IMR-90 (cell line): ENCODE measurements at regions of chr1 and their contacts with region 1.

Region 1: GRCh38 chr1:100866041-100866900 is 28.4 kb downstream of the EXTL2 start:
- DNase-seq: peak; percentile 70
- ATAC-seq: peak; percentile 56
- H3K4me3 ChIP-seq: no peak overlapping the region
- H3K27ac ChIP-seq: peak overlapping the region; percentile 81
- H3K4me1 ChIP-seq: peaks cover 12% of the 10 kb centered on the region
- H3K27me3 ChIP-seq: no peaks in the 10 kb centered on the region
- CTCF ChIP-seq: peak; percentile 65
- POLR2A ChIP-seq: no peak
- RAD21 ChIP-seq: peak; percentile 72

Region 2: GRCh38 chr1:100277866-100278265 is 588.4 kb before region 1 on chr1:
- CTCF ChIA-PET with region 1: no interaction called
- POLR2A ChIA-PET with region 1: no interaction called
- dilution Hi-C with region 1: no loop called
- in situ Hi-C with region 1: no loop called
- intact Hi-C with region 1: loop called (anchors 5 kb)
- DNase-seq: no peak
- ATAC-seq: no peak
- H3K4me3 ChIP-seq: no peak overlapping the region
- H3K27ac ChIP-seq: no peak overlapping the region
- H3K4me1 ChIP-seq: no peaks in the 10 kb centered on the region
- H3K27me3 ChIP-seq: no peaks in the 10 kb centered on the region
- CTCF ChIP-seq: no peak
- POLR2A ChIP-seq: no peak
- RAD21 ChIP-seq: no peak

Region 3: DNA sequence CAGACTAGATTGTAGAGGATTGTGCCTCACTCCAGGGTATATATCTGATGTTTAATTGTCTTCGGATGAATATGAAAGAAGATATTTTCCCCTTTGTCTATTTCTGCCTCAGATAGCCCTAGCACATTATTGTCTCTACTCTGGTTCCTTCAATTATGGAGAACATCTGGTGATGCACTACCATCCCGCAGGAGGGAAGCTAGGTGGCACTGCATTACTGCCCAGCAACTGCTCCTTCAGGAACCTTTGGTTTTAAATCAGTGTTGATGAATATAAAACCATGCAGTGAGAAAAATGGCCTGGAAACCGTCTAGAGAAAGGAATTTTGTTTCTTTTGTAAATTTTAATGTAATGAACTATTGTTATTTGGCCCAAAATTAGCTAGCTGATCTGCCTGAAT is 259.8 kb before region 1 on chr1:
- CTCF ChIA-PET with region 1: interaction called, 27 read pairs
- POLR2A ChIA-PET with region 1: no interaction called
- dilution Hi-C with region 1: no loop called
- in situ Hi-C with region 1: loop called (anchors 5 kb)
- intact Hi-C with region 1: loop called (anchors 1 kb)
- DNase-seq: peak; percentile 74
- ATAC-seq: peak; percentile 91
- H3K4me3 ChIP-seq: no peak overlapping the region
- H3K27ac ChIP-seq: no peak overlapping the region
- H3K4me1 ChIP-seq: peaks cover 4% of the 10 kb centered on the region; the same call in 1 of the 2 replicates
- H3K27me3 ChIP-seq: no peaks in the 10 kb centered on the region
- CTCF ChIP-seq: peak; percentile 81
- POLR2A ChIP-seq: peak; percentile 34; the same call in 1 of the 2 replicates
- RAD21 ChIP-seq: peak; percentile 89

Region 4: GRCh38 chr1:100671601-100672000 is 194.7 kb before region 1 on chr1:
- CTCF ChIA-PET with region 1: interaction called, 6 read pairs
- POLR2A ChIA-PET with region 1: no interaction called
- dilution Hi-C with region 1: no loop called
- in situ Hi-C with region 1: no loop called
- intact Hi-C with region 1: loop called (anchors 1 kb)
- DNase-seq: peak; percentile 60
- ATAC-seq: peak; percentile 70
- H3K4me3 ChIP-seq: no peak overlapping the region
- H3K27ac ChIP-seq: no peak overlapping the region
- H3K4me1 ChIP-seq: peaks cover 3% of the 10 kb centered on the region
- H3K27me3 ChIP-seq: no peaks in the 10 kb centered on the region
- CTCF ChIP-seq: no peak; the same call in 1 of the 2 replicates
- POLR2A ChIP-seq: no peak
- RAD21 ChIP-seq: peak; percentile 29; the same call in 1 of the 2 replicates

Region 5: DNA sequence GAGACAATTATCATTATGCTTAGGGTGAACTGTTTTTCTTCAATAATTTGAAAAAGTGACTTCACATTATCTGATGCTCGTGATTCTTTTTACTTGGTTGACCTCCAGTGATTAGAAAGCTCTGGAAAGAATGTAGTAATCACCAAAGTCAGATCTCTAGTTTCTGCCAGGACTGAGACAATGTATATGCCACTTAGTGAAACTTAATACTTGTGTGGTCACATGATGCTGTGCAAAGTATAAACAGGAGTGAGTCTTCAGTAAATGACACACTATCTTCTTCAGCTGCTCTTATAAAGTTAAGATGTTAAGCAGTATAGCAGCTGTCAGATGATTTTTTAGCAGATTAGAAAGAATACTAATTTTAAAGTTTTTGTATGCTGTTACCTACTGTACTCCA is 129.5 kb before region 1 on chr1:
- CTCF ChIA-PET with region 1: no interaction called
- POLR2A ChIA-PET with region 1: no interaction called
- dilution Hi-C with region 1: no loop called
- in situ Hi-C with region 1: no loop called
- intact Hi-C with region 1: loop called (anchors 2 kb)
- DNase-seq: peak; percentile 83
- ATAC-seq: peak; percentile 68
- H3K4me3 ChIP-seq: no peak overlapping the region
- H3K27ac ChIP-seq: peak overlapping the region; percentile 52; the same call in 1 of the 2 replicates
- H3K4me1 ChIP-seq: peaks cover 6% of the 10 kb centered on the region
- H3K27me3 ChIP-seq: no peaks in the 10 kb centered on the region
- CTCF ChIP-seq: no peak
- POLR2A ChIP-seq: no peak
- RAD21 ChIP-seq: no peak

Region 6: DNA sequence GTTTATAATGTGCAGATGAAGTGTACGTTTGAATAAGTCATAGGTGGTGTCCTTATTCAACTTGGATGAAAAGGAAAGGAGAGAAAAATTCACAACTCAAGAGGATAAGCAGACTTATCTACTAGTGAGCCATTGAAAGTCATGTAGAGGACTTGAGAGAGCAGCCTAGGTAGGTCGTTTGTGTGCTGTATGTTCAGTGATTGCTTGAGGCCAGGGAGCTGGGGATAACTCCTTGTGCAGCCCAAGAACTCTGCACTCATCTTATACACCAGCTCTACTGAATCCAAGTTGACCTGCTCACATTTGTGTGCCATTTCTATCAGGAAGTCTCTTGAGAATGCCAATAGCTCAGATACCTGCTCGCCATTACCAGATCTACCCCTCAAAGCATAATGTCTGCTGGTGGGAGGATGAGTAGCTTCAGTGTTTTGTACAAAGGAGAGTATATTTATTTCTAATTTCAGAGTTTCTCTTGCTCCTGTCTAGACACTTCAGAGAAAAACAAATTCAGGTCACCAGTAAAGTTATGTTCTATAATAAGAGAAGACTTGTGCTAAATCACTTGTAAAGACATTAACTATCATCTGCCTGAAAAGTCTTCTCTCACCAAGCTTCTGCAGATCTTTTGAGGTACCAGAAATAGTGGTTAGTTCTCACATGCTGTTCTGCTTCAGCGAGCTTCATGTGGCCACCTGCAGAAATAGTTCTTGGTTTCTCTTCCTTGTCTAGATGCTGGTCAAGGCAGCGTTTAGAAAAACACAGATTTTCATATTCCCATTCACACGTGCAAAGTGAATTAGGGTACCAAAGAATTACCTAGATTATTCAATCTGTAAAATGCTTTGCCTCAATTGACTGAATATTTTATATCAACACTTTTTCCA is 381.4 kb after region 1 on chr1:
- CTCF ChIA-PET with region 1: no interaction called
- POLR2A ChIA-PET with region 1: no interaction called
- dilution Hi-C with region 1: no loop called
- in situ Hi-C with region 1: no loop called
- intact Hi-C with region 1: no loop called
- DNase-seq: no peak
- ATAC-seq: no peak
- H3K4me3 ChIP-seq: no peak overlapping the region
- H3K27ac ChIP-seq: no peak overlapping the region
- H3K4me1 ChIP-seq: no peaks in the 10 kb centered on the region
- H3K27me3 ChIP-seq: no peaks in the 10 kb centered on the region
- CTCF ChIP-seq: no peak
- POLR2A ChIP-seq: no peak
- RAD21 ChIP-seq: no peak